CD8-positive, alpha-beta T cell (primary cell): ENCODE measurements at regions of chr1 and their contacts with region 1.

Region 1: DNA sequence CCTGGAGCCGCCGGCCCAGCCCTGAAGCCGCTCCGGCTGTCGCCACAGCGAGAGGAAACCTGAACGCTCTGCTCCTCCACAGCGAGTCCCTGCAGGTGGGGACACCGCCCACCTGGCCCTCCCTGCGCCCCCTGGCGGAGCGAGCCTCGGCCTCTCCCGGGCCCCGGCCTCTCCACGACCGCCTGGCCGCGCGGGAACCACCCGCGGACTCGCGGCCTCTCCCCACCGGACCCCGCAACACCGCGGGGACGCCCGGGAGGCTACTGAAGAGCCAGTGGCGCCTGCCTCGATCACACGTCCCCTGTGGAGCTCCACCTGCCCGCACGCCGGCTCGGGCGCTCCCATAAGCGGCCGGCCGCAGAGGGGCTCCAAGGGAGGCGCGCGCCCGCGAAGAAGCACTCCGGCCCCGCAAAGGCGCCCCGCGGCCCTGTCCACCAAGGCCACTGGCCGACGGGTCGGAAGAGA is 109.6 kb downstream of the KCNN3 start:
- DNase-seq: peak; percentile 67 to 94 (median 84)
- ATAC-seq: peak; percentile 91
- H3K4me3 ChIP-seq: peak overlapping the region; percentile 30 to 35
- H3K4me3 Mint-ChIP-seq: peak overlapping the region; percentile 67
- H3K27ac ChIP-seq: no peak overlapping the region
- H3K27ac Mint-ChIP-seq: no peak overlapping the region
- H3K4me1 ChIP-seq: peaks cover 13% of the 10 kb centered on the region
- H3K4me1 Mint-ChIP-seq: peaks cover 25% of the 10 kb centered on the region
- H3K27me3 ChIP-seq: no peaks in the 10 kb centered on the region
- H3K27me3 Mint-ChIP-seq: peaks cover 2% of the 10 kb centered on the region
- CTCF ChIP-seq: peak; percentile 89

Region 2: DNA sequence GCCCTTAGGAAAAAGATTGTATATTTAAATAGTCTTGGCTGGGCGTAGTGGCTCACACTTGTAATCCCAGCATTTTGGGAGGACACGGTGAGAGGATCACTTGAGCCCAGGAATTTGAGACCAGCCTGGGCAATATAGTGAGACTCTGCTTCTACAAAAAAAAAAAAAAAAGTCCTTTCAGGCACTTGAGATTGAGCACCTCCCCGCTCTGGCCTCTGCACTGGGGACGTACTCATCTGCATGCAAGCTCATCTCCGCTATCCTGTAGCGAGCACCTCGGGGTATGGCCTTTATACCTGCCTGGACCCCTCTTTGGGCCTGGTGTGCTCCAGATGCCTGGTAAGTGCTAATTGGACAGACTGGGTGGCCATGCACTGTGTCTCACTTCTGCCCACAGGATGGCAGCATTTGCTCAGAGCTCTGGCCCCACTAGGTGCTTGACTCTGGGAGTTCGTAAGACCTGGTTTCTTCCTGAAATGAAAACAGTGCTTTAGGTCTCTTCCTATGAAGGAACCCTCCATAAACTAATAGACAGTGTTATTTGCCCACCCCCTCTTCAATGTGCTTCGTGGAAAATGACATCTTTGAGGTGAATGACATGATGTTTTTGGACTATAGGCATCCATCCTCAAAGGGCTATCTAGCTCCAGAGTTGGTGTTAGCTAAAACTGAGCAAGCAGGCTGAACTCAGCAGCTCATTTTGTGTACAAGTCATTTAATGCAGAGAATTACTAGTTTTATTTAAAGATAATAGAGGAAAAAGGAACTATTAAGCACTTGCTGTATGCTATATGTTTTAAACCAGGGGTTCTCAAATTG is 90.8 kb before region 1 on chr1:
- CTCF ChIA-PET with region 1: interaction called, 35 read pairs
- POLR2A ChIA-PET with region 1: no interaction called
- intact Hi-C with region 1: loop called (anchors 1 kb)
- DNase-seq: peak; percentile 48 to 86 (median 74)
- ATAC-seq: peak; percentile 100
- H3K4me3 ChIP-seq: no peak overlapping the region
- H3K4me3 Mint-ChIP-seq: no peak overlapping the region
- H3K27ac ChIP-seq: no peak overlapping the region
- H3K27ac Mint-ChIP-seq: no peak overlapping the region
- H3K4me1 ChIP-seq: peaks cover 3% of the 10 kb centered on the region
- H3K4me1 Mint-ChIP-seq: no peaks in the 10 kb centered on the region
- H3K27me3 ChIP-seq: no peaks in the 10 kb centered on the region
- H3K27me3 Mint-ChIP-seq: no peaks in the 10 kb centered on the region
- CTCF ChIP-seq: peak; percentile 80

Region 3: DNA sequence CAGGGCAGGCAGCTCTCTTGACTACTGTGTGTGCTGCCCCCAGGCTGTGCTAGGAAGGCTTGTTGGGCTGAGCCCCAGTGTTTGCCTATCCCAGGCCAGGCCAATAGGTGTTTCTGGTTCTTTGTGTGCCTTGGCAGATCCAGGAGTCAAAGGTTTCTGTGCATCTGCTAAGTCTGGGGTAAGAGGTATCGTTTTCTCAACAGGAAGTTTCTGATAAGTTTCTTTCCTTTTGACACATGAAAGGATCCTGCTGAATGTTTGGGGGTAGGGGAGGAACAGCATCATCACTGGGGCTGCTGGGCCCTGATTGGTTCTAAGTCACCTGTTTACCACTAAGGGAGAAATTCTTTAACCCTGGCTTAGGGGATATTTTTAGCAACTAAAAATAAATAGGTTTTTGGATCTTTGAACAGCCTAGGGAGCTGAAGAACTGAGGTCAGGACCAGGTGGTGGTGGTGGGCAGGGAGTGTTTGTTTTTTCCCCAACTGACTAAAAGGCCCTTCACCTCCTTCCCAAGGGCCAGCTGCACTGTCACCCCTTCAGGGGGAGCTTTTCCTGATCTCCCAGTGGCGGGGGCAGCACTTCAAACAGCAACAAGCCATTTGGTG is 24.5 kb after region 1 on chr1:
- CTCF ChIA-PET with region 1: interaction called, 12 read pairs
- POLR2A ChIA-PET with region 1: no interaction called
- intact Hi-C with region 1: loop called in 1 of 2 experiments (anchors 2 kb)
- DNase-seq: peak in 8 of 9 experiments; percentile 12 to 83 (median 58)
- ATAC-seq: peak; percentile 93
- H3K4me3 ChIP-seq: peak overlapping the region in 1 of 2 experiments; percentile 29
- H3K4me3 Mint-ChIP-seq: peak overlapping the region; percentile 35
- H3K27ac ChIP-seq: peak overlapping the region; percentile 51 to 81
- H3K27ac Mint-ChIP-seq: peak overlapping the region; percentile 93
- H3K4me1 ChIP-seq: peaks cover 35% of the 10 kb centered on the region
- H3K4me1 Mint-ChIP-seq: peaks cover 36% of the 10 kb centered on the region
- H3K27me3 ChIP-seq: no peaks in the 10 kb centered on the region
- H3K27me3 Mint-ChIP-seq: no peaks in the 10 kb centered on the region
- CTCF ChIP-seq: no peak

Region 4: DNA sequence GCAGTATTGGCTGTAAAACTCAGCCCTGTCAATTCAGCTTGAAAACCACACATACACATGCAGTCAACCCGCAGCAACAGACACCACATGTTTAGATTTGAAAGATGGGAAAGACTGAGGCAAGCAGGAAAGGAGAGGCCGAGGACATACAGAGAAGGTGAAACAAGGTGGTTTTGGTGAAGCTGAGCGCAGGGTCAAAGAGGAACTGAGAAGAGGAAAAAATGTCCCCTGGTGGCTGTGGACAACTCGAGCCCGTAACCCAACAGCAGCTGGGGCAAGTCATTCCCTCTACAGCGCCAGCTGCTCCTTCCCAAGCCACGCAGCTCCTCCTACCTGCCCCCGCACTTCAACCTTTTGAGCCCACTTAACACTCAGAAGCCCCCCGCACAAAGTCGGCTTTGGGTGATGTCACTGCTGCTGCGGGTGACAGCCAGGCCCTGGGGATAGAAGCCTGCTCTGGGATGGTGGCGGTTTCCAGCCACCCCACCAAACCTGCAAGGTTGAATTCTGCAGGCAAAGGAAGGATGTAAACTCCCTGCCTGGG is 46.6 kb after region 1 on chr1:
- CTCF ChIA-PET with region 1: interaction called, 11 read pairs
- POLR2A ChIA-PET with region 1: no interaction called
- intact Hi-C with region 1: no loop called
- DNase-seq: no peak
- ATAC-seq: no peak
- H3K4me3 ChIP-seq: no peak overlapping the region
- H3K4me3 Mint-ChIP-seq: no peak overlapping the region
- H3K27ac ChIP-seq: no peak overlapping the region
- H3K27ac Mint-ChIP-seq: no peak overlapping the region
- H3K4me1 ChIP-seq: no peaks in the 10 kb centered on the region
- H3K4me1 Mint-ChIP-seq: peaks cover 13% of the 10 kb centered on the region
- H3K27me3 ChIP-seq: no peaks in the 10 kb centered on the region
- H3K27me3 Mint-ChIP-seq: peaks cover 4% of the 10 kb centered on the region
- CTCF ChIP-seq: no peak